A673 (cell line): ENCODE measurements at regions of chr11 and their contacts with region 1.

Region 1: GRCh38 chr11:84819128-84819527 is 808.0 kb downstream of the DLG2 start:
- DNase-seq: peak; percentile 20
- H3K4me3 ChIP-seq: no peak overlapping the region
- H3K27ac ChIP-seq: no peak overlapping the region
- H3K4me1 ChIP-seq: no peaks in the 10 kb centered on the region
- H3K27me3 ChIP-seq: no peaks in the 10 kb centered on the region
- CTCF ChIP-seq: no peak

Region 2: GRCh38 chr11:84476581-84476980 is 342.5 kb before region 1 on chr11:
- CTCF ChIA-PET with region 1: no interaction called
- POLR2A ChIA-PET with region 1: no interaction called
- intact Hi-C with region 1: no loop called
- DNase-seq: no peak
- H3K4me3 ChIP-seq: no peak overlapping the region
- H3K27ac ChIP-seq: no peak overlapping the region
- H3K4me1 ChIP-seq: peaks cover 6% of the 10 kb centered on the region
- H3K27me3 ChIP-seq: no peaks in the 10 kb centered on the region
- CTCF ChIP-seq: no peak

Region 3: GRCh38 chr11:84558085-84558905 is 260.8 kb before region 1 on chr11:
- CTCF ChIA-PET with region 1: no interaction called
- POLR2A ChIA-PET with region 1: no interaction called
- intact Hi-C with region 1: no loop called
- DNase-seq: peak; percentile 68
- H3K4me3 ChIP-seq: no peak overlapping the region
- H3K27ac ChIP-seq: no peak overlapping the region
- H3K4me1 ChIP-seq: no peaks in the 10 kb centered on the region
- H3K27me3 ChIP-seq: no peaks in the 10 kb centered on the region
- CTCF ChIP-seq: peak; percentile 93

Region 4: GRCh38 chr11:84800755-84801346 is 18.3 kb before region 1 on chr11:
- CTCF ChIA-PET with region 1: no interaction called
- POLR2A ChIA-PET with region 1: interaction called, 16 read pairs
- intact Hi-C with region 1: no loop called
- DNase-seq: peak; percentile 26
- H3K4me3 ChIP-seq: no peak overlapping the region
- H3K27ac ChIP-seq: no peak overlapping the region
- H3K4me1 ChIP-seq: no peaks in the 10 kb centered on the region
- H3K27me3 ChIP-seq: no peaks in the 10 kb centered on the region
- CTCF ChIP-seq: peak; percentile 47; the same call in 1 of the 2 replicates

Region 5: GRCh38 chr11:85154294-85154693 is 335.2 kb after region 1 on chr11:
- CTCF ChIA-PET with region 1: interaction called, 13 read pairs
- POLR2A ChIA-PET with region 1: no interaction called
- intact Hi-C with region 1: no loop called
- DNase-seq: no peak
- H3K4me3 ChIP-seq: no peak overlapping the region
- H3K27ac ChIP-seq: no peak overlapping the region
- H3K4me1 ChIP-seq: no peaks in the 10 kb centered on the region
- H3K27me3 ChIP-seq: no peaks in the 10 kb centered on the region
- CTCF ChIP-seq: no peak